Cardiac septum (tissue), 1 donor: ENCODE measurements at regions of chrX and their contacts with region 1.

Region 1: DNA sequence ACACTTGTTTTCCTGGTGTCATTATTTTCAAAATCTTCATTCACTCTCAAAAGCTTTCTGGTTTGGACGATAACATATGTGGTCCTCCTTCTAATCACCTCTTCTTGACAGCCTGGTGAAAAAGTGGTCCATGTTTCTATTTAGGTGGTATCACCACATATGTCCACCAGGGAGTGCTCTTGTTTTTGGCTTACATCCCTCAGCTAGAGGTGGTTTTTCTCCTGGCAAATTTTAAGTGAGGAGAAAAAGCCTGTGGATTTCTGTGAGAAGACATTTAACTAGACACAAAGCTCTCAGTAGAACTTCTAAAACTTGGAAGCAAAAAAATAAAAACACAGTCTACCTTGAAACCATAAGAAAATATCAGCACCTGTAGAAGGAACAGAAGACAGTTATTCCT is 58.0 kb upstream of the FRMPD4 start:
- DNase-seq: no peak

Region 2: GRCh38 chrX:12701628-12702027 is 621.4 kb after region 1 on chrX:
- intact Hi-C with region 1: loop called (anchors 5 kb)
- DNase-seq: no peak